ENCODE measurements at regions of chr19 and their contacts with region 1.

Region 1: DNA sequence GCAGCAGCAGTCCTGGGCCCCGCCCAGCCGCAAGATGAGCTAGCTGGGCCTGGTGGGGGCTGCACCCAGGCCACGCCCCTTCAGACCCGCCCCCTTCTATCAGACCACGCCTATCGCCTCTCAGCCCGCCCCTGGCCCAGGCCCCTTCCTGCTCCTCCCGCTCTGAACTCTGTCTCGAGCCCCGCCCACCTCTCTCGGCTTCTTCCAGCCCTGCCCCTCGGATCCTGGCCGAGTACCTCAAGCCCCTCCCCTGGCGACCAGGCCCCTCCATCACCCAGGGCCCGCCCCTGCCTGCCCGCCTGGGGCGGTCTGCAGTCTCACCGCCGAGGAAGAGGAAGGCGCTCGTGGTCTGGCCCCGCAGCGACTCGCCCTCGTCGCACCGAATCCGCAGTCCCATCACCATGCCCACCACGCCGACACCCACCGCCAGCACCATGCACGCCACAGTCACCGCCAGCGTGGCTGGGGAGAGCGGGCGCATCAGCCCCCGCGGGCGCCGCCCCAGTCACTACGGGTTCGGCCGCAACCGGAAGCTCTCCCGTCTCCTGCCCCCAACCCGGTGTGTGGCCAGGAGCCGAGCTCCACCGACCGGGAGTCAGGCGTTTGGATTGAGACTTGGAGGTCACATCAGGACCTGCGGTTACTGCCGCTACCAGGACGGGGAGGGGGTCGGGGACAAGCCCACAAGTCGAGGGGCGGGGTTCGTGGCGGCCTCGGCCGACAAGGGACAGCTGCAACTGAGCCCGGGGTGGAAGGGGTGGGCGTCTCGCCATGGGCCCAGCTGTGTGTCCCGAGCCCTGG is 1.0 kb downstream of the CLDND2 start:
- DNase-seq: peak; percentile 96 to 99 (median 97)
- ATAC-seq: peak; percentile 89
- H3K4me3 ChIP-seq: peak overlapping the region; percentile 75
- H3K27ac ChIP-seq: peak overlapping the region; percentile 85
- H3K4me1 ChIP-seq: peaks cover 29 to 57% of the 10 kb centered on the region in 2 experiments
- H3K27me3 ChIP-seq: no peaks in the 10 kb centered on the region
- CTCF ChIP-seq: peak in 1 of 3 experiments; percentile 1; a peak in 1 of 6 replicates
- EP300 ChIP-seq: no peak
- POLR2A ChIP-seq: peak; percentile 85
- RAD21 ChIP-seq: peak in 1 of 2 experiments; percentile 5; a peak in 1 of 4 replicates

Region 2: DNA sequence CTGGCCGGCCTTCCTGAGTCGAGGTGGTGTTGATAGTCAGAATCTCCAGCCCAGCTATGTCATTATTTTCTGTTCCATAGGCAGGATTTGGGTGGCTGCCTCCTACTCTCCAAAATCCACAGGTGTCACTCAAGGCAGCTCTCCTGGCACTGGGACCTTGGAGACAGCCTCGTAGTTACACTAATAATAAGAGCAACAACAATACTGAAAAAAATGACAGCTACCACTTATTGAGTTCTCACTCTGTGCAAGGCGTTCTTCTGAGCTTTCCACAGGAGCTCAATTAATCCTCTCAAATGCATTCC is 320.8 kb before region 1 on chr19:
- CTCF ChIA-PET with region 1: no interaction called
- POLR2A ChIA-PET with region 1: no interaction called
- in situ Hi-C with region 1: no loop called
- intact Hi-C with region 1: no loop called
- DNase-seq: no peak
- ATAC-seq: no peak
- H3K4me3 ChIP-seq: no peak overlapping the region
- H3K27ac ChIP-seq: no peak overlapping the region
- H3K4me1 ChIP-seq: no peaks in the 10 kb centered on the region
- H3K27me3 ChIP-seq: peaks cover 6 to 19% of the 10 kb centered on the region in 2 experiments; a peak in 3 of 5 replicates
- CTCF ChIP-seq: no peak
- EP300 ChIP-seq: no peak
- POLR2A ChIP-seq: no peak
- RAD21 ChIP-seq: no peak

Region 3: GRCh38 chr19:51354742-51355148 is 13.0 kb before region 1 on chr19:
- CTCF ChIA-PET with region 1: no interaction called
- POLR2A ChIA-PET with region 1: interaction called, 13 read pairs
- in situ Hi-C with region 1: no loop called
- intact Hi-C with region 1: no loop called
- DNase-seq: no peak
- ATAC-seq: no peak
- H3K4me3 ChIP-seq: no peak overlapping the region
- H3K27ac ChIP-seq: peak overlapping the region; percentile 32; the same call in 1 of the 3 replicates
- H3K4me1 ChIP-seq: peaks cover 23 to 32% of the 10 kb centered on the region in 2 experiments
- H3K27me3 ChIP-seq: no peaks in the 10 kb centered on the region
- CTCF ChIP-seq: no peak
- EP300 ChIP-seq: no peak
- POLR2A ChIP-seq: no peak
- RAD21 ChIP-seq: no peak

Region 4: DNA sequence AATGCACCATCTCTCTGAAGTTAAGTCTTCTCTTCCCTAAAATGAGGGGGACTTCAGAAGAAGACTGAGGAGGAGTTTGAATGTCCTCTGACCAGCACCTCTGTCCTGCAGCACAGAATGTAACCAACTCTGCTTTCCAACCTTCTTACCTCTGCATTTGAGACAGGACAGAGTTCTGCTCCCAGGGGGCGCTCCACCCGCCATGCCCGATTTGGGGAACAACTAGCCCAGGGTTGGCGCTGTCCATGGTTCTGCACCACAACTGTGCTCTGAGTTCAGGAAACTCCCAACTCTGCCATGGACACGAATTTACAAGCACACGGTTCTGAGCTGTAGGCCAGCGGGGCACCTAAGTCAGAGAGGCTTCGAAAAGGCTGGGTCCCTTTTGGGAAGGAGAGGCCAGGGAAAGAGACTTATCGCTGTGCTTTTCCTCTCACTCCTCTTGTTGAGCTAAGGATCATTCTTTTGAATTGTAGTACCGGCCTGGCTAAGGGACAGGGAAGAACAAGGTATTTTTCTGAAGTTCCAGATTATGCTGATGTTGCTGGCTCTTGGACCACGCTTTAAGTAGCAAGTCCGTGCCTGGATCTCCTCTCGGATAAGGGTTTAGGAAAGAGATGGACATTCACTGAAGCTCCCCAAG is 240.3 kb after region 1 on chr19:
- CTCF ChIA-PET with region 1: no interaction called
- POLR2A ChIA-PET with region 1: no interaction called
- in situ Hi-C with region 1: no loop called
- intact Hi-C with region 1: no loop called
- DNase-seq: peak; percentile 82 to 93 (median 88)
- ATAC-seq: peak; percentile 97
- H3K4me3 ChIP-seq: no peak overlapping the region
- H3K27ac ChIP-seq: no peak overlapping the region
- H3K4me1 ChIP-seq: no peaks in the 10 kb centered on the region
- H3K27me3 ChIP-seq: peaks cover 0 to 13% of the 10 kb centered on the region in 2 experiments; a peak in 2 of 5 replicates
- CTCF ChIP-seq: peak; percentile 96 to 98 (median 96)
- EP300 ChIP-seq: peak; percentile 32; the same call in 1 of the 2 replicates
- POLR2A ChIP-seq: no peak
- RAD21 ChIP-seq: peak; percentile 74 to 87